ENCODE measurements at regions of chr5 and their contacts with region 1.

Region 1: GRCh38 chr5:61273279-61273975 is 58.6 kb upstream of the ZSWIM6 start:
- DNase-seq: no peak
- H3K4me3 ChIP-seq: no peak overlapping the region
- CTCF ChIP-seq: no peak
- POLR2A ChIP-seq: no peak

Region 2: GRCh38 chr5:60843936-60844905 is 429.2 kb before region 1 on chr5 and contains the start of gene ELOVL7:
- intact Hi-C with region 1: no loop called
- DNase-seq: peak in 1 of 2 donors; percentile 40
- H3K4me3 ChIP-seq: peak within 1 kb of the TSS; percentile 75
- CTCF ChIP-seq: no peak
- POLR2A ChIP-seq: no peak
- total RNA-seq, gene ELOVL7: 41.5 to 96.9 (median 69.8) TPM

Region 3: GRCh38 chr5:61319388-61320146 is 46.1 kb after region 1 on chr5:
- intact Hi-C with region 1: loop called (anchors 2 kb)
- DNase-seq: no peak
- H3K4me3 ChIP-seq: no peak overlapping the region
- CTCF ChIP-seq: no peak
- POLR2A ChIP-seq: no peak

Region 4: DNA sequence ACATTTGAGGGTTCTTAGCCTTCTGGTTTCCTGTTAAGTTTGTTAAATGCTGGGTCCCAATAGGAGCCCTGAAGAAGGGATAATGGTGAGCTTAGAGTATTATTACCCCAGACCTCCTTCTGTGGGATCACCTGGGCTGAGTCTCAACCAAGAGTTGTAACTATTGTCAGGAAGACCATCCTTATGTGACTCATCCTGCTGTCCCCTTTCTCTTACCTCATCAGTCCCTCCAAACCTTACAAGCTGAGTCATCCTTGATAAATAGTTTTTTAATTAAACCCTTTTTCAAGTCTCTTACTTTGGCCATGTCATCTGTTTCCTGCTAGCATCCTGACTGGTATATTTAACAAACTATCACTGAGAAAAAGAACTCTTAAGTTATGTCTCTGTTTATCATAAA is 1808.0 kb after region 1 on chr5:
- intact Hi-C with region 1: no loop called
- DNase-seq: no peak
- H3K4me3 ChIP-seq: no peak overlapping the region
- CTCF ChIP-seq: no peak
- POLR2A ChIP-seq: no peak

Measured in lower leg skin (tissue), 4 donors.